ENCODE measurements at regions of chrX and their contacts with region 1.

Region 1: DNA sequence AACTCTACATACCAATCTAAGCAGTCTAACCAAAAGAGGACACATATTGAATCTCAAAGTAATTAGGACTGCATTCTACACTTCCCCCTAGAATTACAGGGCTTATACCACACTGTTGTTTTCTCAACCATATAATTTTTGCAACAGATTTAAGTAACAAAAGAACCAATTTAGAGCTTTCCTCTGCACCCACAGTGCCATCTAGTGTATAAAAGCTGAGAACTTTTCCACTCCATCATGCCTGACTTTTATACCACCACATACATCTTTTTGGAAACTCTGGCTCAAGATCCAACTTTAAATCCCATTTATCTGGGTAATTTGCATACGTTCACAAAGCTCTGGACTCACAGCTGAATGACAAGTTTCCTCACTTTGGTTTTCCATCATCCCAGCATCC is 99.5 kb downstream of the EFHC2 start:
- DNase-seq: no peak
- H3K4me3 ChIP-seq: no peak overlapping the region
- H3K27me3 ChIP-seq: no peaks in the 10 kb centered on the region
- CTCF ChIP-seq: peak; percentile 41; the same call in 1 of the 2 replicates

Region 2: GRCh38 chrX:44228621-44229020 is 15.4 kb before region 1 on chrX:
- CTCF ChIA-PET with region 1: interaction called, 10 read pairs
- POLR2A ChIA-PET with region 1: no interaction called
- DNase-seq: no peak
- H3K4me3 ChIP-seq: no peak overlapping the region
- H3K27me3 ChIP-seq: no peaks in the 10 kb centered on the region
- CTCF ChIP-seq: no peak

Region 3: DNA sequence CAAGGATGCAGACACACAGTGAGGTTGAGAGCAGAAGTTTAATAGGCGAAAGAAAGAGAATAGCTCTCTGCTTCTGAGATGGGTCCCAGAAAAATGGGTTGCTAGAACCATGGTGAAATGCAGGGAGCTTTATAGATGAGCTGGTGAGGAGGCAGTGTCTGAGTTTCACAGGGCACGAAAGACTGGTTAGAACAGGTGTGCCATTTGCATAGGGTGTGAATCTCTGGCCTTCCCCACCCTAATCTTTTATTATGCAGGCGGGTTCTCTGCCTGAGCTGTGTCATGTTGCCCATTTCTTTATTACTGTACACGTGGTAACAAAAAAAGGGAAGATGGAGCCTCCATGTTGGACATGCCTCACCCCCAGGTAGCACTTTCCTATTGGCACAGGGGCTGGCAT is 259.5 kb after region 1 on chrX:
- CTCF ChIA-PET with region 1: no interaction called
- POLR2A ChIA-PET with region 1: no interaction called
- DNase-seq: no peak
- H3K4me3 ChIP-seq: no peak overlapping the region
- H3K27me3 ChIP-seq: no peaks in the 10 kb centered on the region
- CTCF ChIP-seq: no peak

Measured in BJ (cell line).